GM12878 (cell line): ENCODE measurements at regions of chr20 and their contacts with region 1.

Region 1: DNA sequence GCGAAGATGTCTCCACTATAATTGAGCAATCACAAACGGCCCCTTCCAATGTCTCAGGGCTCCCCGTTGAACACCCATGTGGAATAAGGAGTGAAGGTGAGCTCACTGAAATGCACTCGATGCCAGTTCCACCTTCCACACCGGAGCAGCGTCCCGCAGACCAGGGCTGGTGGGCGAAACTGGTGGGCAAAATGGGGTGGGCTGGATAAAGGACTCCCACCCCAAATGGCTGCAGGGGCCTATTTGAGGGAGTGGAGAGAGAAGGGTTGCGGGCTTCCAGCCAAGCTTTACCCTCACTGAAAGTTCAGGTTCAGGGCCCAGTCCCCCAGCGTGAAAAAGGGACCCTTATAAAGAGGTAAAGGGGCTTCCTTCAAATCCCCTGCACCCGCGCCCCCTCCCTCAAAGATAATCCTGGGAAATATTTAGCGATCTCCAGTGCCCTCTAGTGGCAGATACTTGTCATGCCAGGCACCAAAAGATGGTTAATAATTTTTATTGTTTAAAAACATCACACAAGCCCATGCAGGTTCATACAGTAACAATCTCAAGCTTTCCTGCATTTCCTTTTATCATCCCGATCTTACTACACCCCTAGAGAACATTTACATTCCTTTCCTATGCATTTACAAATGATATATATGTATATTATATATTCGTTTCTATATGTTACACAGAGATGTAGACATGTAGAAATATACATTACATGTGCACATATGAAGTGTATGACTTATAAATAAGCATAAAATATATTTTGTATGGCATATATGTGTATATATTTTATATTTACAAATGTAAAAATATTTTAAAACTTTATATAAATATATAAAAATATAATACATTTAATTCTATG is 58.2 kb upstream of the NKX2-2 start:
- DNase-seq: no peak
- ATAC-seq: peak; percentile 38; the same call in 2 of the 3 replicates
- H3K4me3 ChIP-seq: no peak overlapping the region
- H3K27ac ChIP-seq: no peak overlapping the region
- H3K4me1 ChIP-seq: no peaks in the 10 kb centered on the region
- H3K27me3 ChIP-seq: peaks cover 0 to 3% of the 10 kb centered on the region in 2 experiments; a peak in 2 of 4 replicates
- CTCF ChIP-seq: peak; percentile 72 to 85 (median 79)
- EP300 ChIP-seq: no peak
- POLR2A ChIP-seq: no peak
- RAD21 ChIP-seq: peak; percentile 77

Region 2: GRCh38 chr20:21505161-21505809 is 66.8 kb before region 1 on chr20:
- CTCF ChIA-PET with region 1: interaction called, 19 read pairs
- POLR2A ChIA-PET with region 1: no interaction called
- RAD21 ChIA-PET with region 1: interaction called, 17 read pairs
- SMC1A ChIA-PET with region 1: interaction called, 18 read pairs
- in situ Hi-C with region 1: no loop called
- intact Hi-C with region 1: no loop called
- DNase-seq: no peak
- ATAC-seq: peak; percentile 70
- H3K4me3 ChIP-seq: no peak overlapping the region
- H3K27ac ChIP-seq: no peak overlapping the region
- H3K4me1 ChIP-seq: peaks cover 12% of the 10 kb centered on the region
- H3K27me3 ChIP-seq: peaks cover 13 to 22% of the 10 kb centered on the region in 2 experiments
- CTCF ChIP-seq: peak; percentile 98 to 99 (median 98); a peak in 5 of 6 replicates
- EP300 ChIP-seq: no peak
- POLR2A ChIP-seq: no peak
- RAD21 ChIP-seq: peak; percentile 98

Region 3: GRCh38 chr20:21529863-21530262 is 42.2 kb before region 1 on chr20:
- CTCF ChIA-PET with region 1: interaction called, 149 read pairs
- POLR2A ChIA-PET with region 1: interaction called, 3 read pairs
- RAD21 ChIA-PET with region 1: interaction called, 55 read pairs
- SMC1A ChIA-PET with region 1: interaction called, 131 read pairs
- in situ Hi-C with region 1: loop called (anchors 10 kb)
- intact Hi-C with region 1: loop called (anchors 1 kb)
- DNase-seq: no peak
- ATAC-seq: peak; percentile 79
- H3K4me3 ChIP-seq: no peak overlapping the region
- H3K27ac ChIP-seq: no peak overlapping the region
- H3K4me1 ChIP-seq: no peaks in the 10 kb centered on the region
- H3K27me3 ChIP-seq: no peaks in the 10 kb centered on the region; a peak in 3 of 4 replicates
- CTCF ChIP-seq: peak; percentile 45 to 54 (median 45); a peak in 4 of 6 replicates
- EP300 ChIP-seq: no peak
- POLR2A ChIP-seq: no peak
- RAD21 ChIP-seq: peak; percentile 20; the same call in 1 of the 2 replicates

Region 4: GRCh38 chr20:21548390-21549035 is 23.6 kb before region 1 on chr20:
- CTCF ChIA-PET with region 1: interaction called, 56 read pairs
- POLR2A ChIA-PET with region 1: no interaction called
- RAD21 ChIA-PET with region 1: interaction called, 26 read pairs
- SMC1A ChIA-PET with region 1: interaction called, 31 read pairs
- in situ Hi-C with region 1: no loop called
- intact Hi-C with region 1: no loop called
- DNase-seq: peak; percentile 46
- ATAC-seq: peak; percentile 86
- H3K4me3 ChIP-seq: no peak overlapping the region
- H3K27ac ChIP-seq: no peak overlapping the region
- H3K4me1 ChIP-seq: peaks cover 4% of the 10 kb centered on the region
- H3K27me3 ChIP-seq: peaks cover 0 to 2% of the 10 kb centered on the region in 2 experiments; a peak in 1 of 4 replicates
- CTCF ChIP-seq: no peak
- EP300 ChIP-seq: peak in 1 of 2 experiments; percentile 43; a peak in 2 of 4 replicates
- POLR2A ChIP-seq: no peak
- RAD21 ChIP-seq: no peak

Region 5: DNA sequence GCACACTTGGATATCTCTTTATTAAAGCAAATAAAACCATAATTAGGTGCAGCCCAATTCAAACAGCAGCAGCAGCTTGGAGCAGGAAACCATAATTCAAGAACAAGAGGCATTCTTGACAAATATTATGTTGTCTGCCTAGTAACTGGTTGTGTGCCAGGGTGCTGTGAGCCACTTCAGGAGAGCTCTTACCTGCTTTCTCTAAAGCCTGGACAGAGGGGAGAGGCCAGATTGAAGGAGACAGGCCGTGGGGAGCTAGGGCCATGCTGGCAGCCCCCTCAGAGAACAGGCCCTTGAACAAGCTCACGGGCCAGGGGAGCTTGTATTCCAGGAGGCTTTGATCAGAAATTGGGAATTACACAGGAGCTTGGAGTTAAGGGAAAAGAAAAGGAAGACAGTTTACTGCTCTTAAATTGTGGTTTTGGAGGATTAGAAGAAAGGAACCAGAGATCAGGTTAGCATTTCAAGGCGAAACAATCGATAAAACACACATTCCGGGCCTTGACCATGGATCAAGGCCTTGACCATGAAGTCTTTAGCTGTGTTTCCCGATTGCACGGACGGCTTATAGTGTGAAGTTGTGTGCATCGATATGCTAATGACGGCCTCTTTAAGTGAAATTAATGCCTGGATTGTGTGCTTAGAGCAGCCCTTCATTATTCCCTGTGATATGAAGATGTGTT is 11.6 kb after region 1 on chr20:
- CTCF ChIA-PET with region 1: interaction called, 10 read pairs
- POLR2A ChIA-PET with region 1: no interaction called
- RAD21 ChIA-PET with region 1: no interaction called
- SMC1A ChIA-PET with region 1: interaction called, 3 read pairs
- in situ Hi-C with region 1: no loop called
- intact Hi-C with region 1: no loop called
- DNase-seq: no peak
- ATAC-seq: no peak
- H3K4me3 ChIP-seq: no peak overlapping the region
- H3K27ac ChIP-seq: no peak overlapping the region
- H3K4me1 ChIP-seq: no peaks in the 10 kb centered on the region
- H3K27me3 ChIP-seq: peaks cover 0 to 3% of the 10 kb centered on the region in 2 experiments; a peak in 1 of 4 replicates
- CTCF ChIP-seq: no peak
- EP300 ChIP-seq: no peak
- POLR2A ChIP-seq: no peak
- RAD21 ChIP-seq: no peak